ENCODE measurements at regions of chr1 and their contacts with region 1.

Region 1: GRCh38 chr1:39720094-39720999 is 18.3 kb upstream of the PPIE start:
- DNase-seq: peak; percentile 68
- H3K4me3 ChIP-seq: no peak overlapping the region
- H3K27ac ChIP-seq: no peak overlapping the region
- H3K4me1 ChIP-seq: no peaks in the 10 kb centered on the region
- H3K27me3 ChIP-seq: peaks cover 25 to 55% of the 10 kb centered on the region in 2 experiments
- CTCF ChIP-seq: peak in 1 of 2 donors; percentile 33
- POLR2A ChIP-seq: no peak

Region 2: DNA sequence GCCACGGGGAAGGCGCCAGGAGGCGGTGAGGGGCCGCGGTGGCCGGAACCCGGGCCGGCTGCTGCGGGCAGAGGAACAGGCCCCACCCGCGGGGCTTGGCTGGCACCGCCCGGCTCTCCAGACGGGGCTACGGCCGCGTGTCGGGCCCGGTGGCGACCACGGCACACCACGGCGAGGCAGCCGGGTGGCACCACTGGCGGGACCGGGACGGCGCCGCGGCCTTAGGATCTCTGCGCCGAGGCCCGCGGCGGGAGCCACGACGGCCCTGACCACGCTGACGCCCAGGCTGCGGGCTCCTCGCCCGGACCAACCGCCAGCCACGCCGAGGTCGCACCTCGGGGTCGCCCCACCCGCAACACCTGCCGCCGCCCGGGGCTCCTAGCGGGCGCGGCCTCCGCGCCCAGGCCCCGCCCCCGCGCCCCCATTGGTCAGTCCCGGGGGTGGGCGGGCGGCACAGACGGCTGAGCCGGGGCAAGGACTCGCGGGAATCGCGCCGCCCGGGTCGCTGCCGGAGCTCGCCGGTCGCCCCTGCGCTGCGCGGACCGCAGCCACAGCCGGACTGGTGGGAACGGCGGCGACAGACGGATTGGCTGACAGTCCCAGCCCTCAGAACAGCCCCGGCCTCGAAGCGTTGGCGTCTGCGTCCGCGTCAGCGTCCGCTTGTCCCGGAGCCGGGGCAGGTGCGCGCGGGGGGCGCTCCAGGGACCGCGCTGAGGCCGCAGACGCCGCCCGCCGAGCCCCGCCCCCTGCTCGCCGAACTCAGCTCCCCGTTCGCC is 229.0 kb before region 1 on chr1 and contains the start of gene BMP8A:
- CTCF ChIA-PET with region 1: no interaction called
- POLR2A ChIA-PET with region 1: no interaction called
- dilution Hi-C with region 1: no loop called
- intact Hi-C with region 1: loop called (anchors 5 kb)
- DNase-seq: peak; percentile 65
- H3K4me3 ChIP-seq: peak within 1 kb of the TSS in 2 of 3 experiments; percentile 17 to 50
- H3K27ac ChIP-seq: no peak within 1 kb of the TSS
- H3K4me1 ChIP-seq: peaks cover 6% of the 10 kb centered on the region
- H3K27me3 ChIP-seq: peaks cover 7 to 12% of the 10 kb centered on the region in 2 experiments
- CTCF ChIP-seq: no peak
- POLR2A ChIP-seq: peak; percentile 19
- total RNA-seq, gene BMP8A: 0.44 TPM in 1 of 2 replicates, not detected in the other

Region 3: DNA sequence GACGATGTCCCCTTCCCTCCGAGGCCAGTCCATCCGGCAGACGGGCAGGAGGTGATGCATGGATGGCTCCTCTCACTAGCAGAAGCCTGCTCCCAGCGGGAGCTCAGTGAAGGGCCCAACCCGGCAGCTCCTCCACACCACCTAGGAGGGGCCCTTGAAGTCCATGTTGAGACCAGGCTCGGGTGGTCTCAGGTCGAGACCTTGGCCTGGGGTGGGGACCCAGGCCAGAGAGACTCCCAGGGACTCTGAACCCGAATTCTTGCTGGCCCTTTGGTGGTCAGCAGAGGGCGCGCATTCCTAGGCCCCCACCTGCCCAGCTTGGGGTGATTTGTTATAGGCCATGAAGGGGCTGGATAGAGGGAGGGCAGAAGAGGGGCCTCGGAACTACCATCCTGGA is 47.8 kb before region 1 on chr1:
- CTCF ChIA-PET with region 1: interaction called, 68 read pairs
- POLR2A ChIA-PET with region 1: no interaction called
- dilution Hi-C with region 1: no loop called
- intact Hi-C with region 1: loop called (anchors 1 kb)
- DNase-seq: peak; percentile 13
- H3K4me3 ChIP-seq: no peak overlapping the region
- H3K27ac ChIP-seq: no peak overlapping the region
- H3K4me1 ChIP-seq: no peaks in the 10 kb centered on the region
- H3K27me3 ChIP-seq: peaks cover 42 to 49% of the 10 kb centered on the region in 2 experiments
- CTCF ChIP-seq: peak; percentile 39 to 66
- POLR2A ChIP-seq: no peak

Region 4: GRCh38 chr1:39738622-39739366 is 18.4 kb after region 1 on chr1 and contains the start of gene PPIE:
- CTCF ChIA-PET with region 1: interaction called, 12 read pairs
- POLR2A ChIA-PET with region 1: no interaction called
- dilution Hi-C with region 1: no loop called
- intact Hi-C with region 1: no loop called
- DNase-seq: peak; percentile 88
- H3K4me3 ChIP-seq: peak within 1 kb of the TSS; percentile 60 to 88 (median 81)
- H3K27ac ChIP-seq: peak within 1 kb of the TSS; percentile 43
- H3K4me1 ChIP-seq: peaks cover 8% of the 10 kb centered on the region
- H3K27me3 ChIP-seq: peaks cover 3 to 9% of the 10 kb centered on the region in 2 experiments
- CTCF ChIP-seq: no peak
- POLR2A ChIP-seq: peak; percentile 85
- total RNA-seq, gene PPIE: 42.6 and 44.4 TPM in 2 replicates